ENCODE measurements at regions of chr15 and their contacts with region 1.

Region 1: DNA sequence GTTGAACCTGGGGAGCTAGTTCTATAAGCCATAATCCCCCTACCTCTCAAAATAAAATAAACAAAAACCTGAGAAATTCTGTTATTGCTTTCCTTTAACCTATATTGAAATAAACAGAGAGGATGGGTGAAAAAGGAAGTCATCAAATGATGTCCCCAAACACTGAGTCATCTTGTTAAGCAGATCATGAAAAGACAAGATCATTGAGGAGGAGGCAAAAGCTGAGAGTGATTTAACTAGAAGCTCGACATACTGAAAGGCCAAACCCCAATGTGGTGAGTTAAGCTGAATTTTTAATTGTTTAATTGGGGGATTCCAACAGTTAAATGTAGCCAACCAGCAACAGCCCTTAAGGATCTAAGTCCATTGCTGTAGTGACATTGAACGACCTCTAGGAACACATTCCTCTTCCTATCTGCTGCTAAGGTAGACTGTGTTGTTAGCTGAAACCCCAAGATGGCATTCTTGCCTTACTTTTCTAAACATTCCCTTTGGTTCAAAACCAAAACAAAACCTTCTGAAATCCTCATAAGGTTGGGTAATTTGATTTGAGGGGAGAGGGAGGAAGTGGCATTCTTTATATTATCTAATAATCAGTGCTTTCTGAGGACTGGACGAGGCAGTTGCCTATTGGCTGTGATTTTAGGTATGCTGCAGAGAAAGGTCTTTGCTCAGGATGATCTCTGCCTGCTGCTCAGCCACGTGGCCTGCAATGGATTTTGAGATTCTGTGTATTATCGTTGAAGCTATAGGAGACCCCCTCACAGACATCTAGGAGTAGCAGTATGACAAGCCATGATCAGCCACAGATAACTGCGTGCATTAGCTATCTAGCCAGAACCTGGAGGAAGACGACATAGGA is 62.7 kb upstream of the BNIP2 start:
- DNase-seq: no peak
- H3K4me3 ChIP-seq: no peak overlapping the region
- H3K27ac ChIP-seq: no peak overlapping the region
- H3K4me1 ChIP-seq: peaks cover 0 to 3% (median 0%) of the 10 kb centered on the region in 4 experiments; a peak in 1 of 7 replicates
- H3K27me3 ChIP-seq: no peaks in the 10 kb centered on the region; a peak in 1 of 7 replicates
- CTCF ChIP-seq: peak in 2 of 3 experiments; percentile 91 to 99; a peak in 3 of 4 replicates
- EP300 ChIP-seq: no peak
- POLR2A ChIP-seq: no peak
- RAD21 ChIP-seq: peak; percentile 91 to 92

Region 2: DNA sequence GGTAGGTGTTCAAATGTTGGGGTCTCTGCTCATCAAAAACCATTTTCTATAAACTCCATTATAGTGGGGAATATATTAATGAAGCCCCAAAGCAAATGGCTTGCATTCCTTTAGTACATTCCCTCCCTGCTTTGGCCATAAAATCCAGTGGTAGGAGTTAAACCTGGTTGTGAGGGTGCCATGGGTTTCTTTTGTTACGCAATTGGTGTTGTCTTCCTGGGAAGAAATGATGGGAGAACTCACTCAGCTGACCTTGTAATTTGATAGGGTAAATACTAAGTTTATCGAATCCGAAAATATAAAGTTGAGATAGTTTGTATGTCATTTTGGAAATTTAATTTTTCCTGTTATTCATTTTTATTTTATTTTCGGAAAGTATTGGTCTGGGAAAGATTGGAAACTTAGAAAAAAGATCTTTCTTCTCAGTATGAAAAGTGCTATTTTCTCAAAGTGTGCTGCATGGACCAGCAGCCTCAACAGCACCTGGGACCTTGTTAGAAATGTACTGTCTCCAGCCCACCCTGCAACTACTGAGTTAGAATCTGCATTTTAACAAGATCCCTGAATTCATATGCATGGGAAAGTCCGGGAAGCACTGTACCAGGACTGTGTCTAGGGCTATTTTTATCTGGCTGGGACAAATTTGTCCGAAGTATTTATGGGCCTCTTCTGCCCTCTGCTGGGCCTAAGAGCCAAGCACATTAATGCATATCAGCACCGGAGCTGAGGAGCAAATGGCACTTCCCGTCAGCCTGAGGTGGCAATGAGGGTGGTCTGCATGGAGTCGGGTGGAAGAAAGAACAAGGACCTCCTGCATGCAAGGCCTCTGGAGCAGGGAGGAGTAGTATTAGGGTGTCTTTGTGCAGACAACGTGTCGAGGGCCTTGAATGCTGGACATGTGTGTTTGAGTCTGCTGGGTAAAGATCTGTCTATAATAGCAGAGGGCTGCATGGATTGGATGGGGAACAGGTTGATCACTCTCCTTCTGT is 259.1 kb before region 1 on chr15:
- CTCF ChIA-PET with region 1: no interaction called
- POLR2A ChIA-PET with region 1: no interaction called
- DNase-seq: peak; percentile 29 to 63
- H3K4me3 ChIP-seq: peak overlapping the region in 1 of 4 experiments; percentile 10; a peak in 2 of 8 replicates
- H3K27ac ChIP-seq: no peak overlapping the region
- H3K4me1 ChIP-seq: peaks cover 0 to 6% (median 2%) of the 10 kb centered on the region in 4 experiments; a peak in 2 of 7 replicates
- H3K27me3 ChIP-seq: no peaks in the 10 kb centered on the region
- CTCF ChIP-seq: peak; percentile 63 to 91 (median 90)
- EP300 ChIP-seq: no peak
- POLR2A ChIP-seq: no peak
- RAD21 ChIP-seq: peak; percentile 98

Region 3: GRCh38 chr15:59711451-59712243 is 40.1 kb before region 1 on chr15:
- CTCF ChIA-PET with region 1: no interaction called
- POLR2A ChIA-PET with region 1: no interaction called
- DNase-seq: no peak
- H3K4me3 ChIP-seq: no peak overlapping the region
- H3K27ac ChIP-seq: no peak overlapping the region
- H3K4me1 ChIP-seq: no peaks in the 10 kb centered on the region
- H3K27me3 ChIP-seq: no peaks in the 10 kb centered on the region
- CTCF ChIP-seq: no peak
- EP300 ChIP-seq: no peak
- POLR2A ChIP-seq: no peak
- RAD21 ChIP-seq: no peak

Region 4: DNA sequence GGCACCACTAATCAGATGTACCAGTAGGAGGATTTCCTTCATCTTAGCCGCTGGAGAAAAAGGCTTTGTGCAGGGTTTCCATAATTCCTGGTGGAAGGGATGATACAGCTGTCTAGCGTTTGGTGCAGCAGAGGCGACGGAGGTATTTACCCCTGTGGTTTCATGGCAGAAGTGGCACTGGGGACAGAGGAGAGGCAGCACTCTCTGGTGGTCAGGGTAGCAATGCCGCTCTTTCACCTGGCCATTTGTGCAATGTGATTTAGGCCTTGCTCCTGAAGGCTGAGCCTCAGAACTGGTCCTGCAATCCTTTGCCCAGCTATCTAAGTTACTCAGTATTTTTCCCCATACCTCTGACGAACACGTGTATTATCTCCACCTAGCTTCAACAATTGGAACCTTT is 15.6 kb before region 1 on chr15:
- CTCF ChIA-PET with region 1: interaction called, 27 read pairs
- POLR2A ChIA-PET with region 1: no interaction called
- DNase-seq: no peak
- H3K4me3 ChIP-seq: no peak overlapping the region
- H3K27ac ChIP-seq: no peak overlapping the region
- H3K4me1 ChIP-seq: no peaks in the 10 kb centered on the region
- H3K27me3 ChIP-seq: no peaks in the 10 kb centered on the region
- CTCF ChIP-seq: peak; percentile 54 to 63 (median 56)
- EP300 ChIP-seq: no peak
- POLR2A ChIP-seq: no peak
- RAD21 ChIP-seq: peak; percentile 44 to 49

Region 5: GRCh38 chr15:59741274-59741906 is 10.4 kb before region 1 on chr15:
- CTCF ChIA-PET with region 1: interaction called, 27 read pairs
- POLR2A ChIA-PET with region 1: interaction called, 4 read pairs
- DNase-seq: no peak
- H3K4me3 ChIP-seq: no peak overlapping the region
- H3K27ac ChIP-seq: no peak overlapping the region
- H3K4me1 ChIP-seq: no peaks in the 10 kb centered on the region
- H3K27me3 ChIP-seq: no peaks in the 10 kb centered on the region
- CTCF ChIP-seq: peak in 2 of 3 experiments; percentile 62 to 73; a peak in 3 of 4 replicates
- EP300 ChIP-seq: no peak
- POLR2A ChIP-seq: no peak
- RAD21 ChIP-seq: peak; percentile 77 to 83

Region 6: GRCh38 chr15:59764775-59765174 is 13.0 kb after region 1 on chr15:
- CTCF ChIA-PET with region 1: interaction called, 13 read pairs
- POLR2A ChIA-PET with region 1: no interaction called
- DNase-seq: no peak
- H3K4me3 ChIP-seq: no peak overlapping the region
- H3K27ac ChIP-seq: no peak overlapping the region
- H3K4me1 ChIP-seq: no peaks in the 10 kb centered on the region; a peak in 2 of 7 replicates
- H3K27me3 ChIP-seq: no peaks in the 10 kb centered on the region
- CTCF ChIP-seq: peak in 2 of 3 experiments; percentile 16 to 19; a peak in 2 of 4 replicates
- EP300 ChIP-seq: no peak
- POLR2A ChIP-seq: no peak
- RAD21 ChIP-seq: peak in 1 of 2 experiments; percentile 25; a peak in 1 of 4 replicates

Region 7: GRCh38 chr15:60272625-60273024 is 520.8 kb after region 1 on chr15:
- CTCF ChIA-PET with region 1: interaction called, 11 read pairs
- POLR2A ChIA-PET with region 1: no interaction called
- DNase-seq: no peak
- H3K4me3 ChIP-seq: no peak overlapping the region
- H3K27ac ChIP-seq: no peak overlapping the region
- H3K4me1 ChIP-seq: no peaks in the 10 kb centered on the region
- H3K27me3 ChIP-seq: no peaks in the 10 kb centered on the region
- CTCF ChIP-seq: peak; percentile 25 to 44 (median 29); a peak in 3 of 4 replicates
- EP300 ChIP-seq: no peak
- POLR2A ChIP-seq: no peak
- RAD21 ChIP-seq: peak; percentile 31 to 41; a peak in 3 of 4 replicates

Region 8: DNA sequence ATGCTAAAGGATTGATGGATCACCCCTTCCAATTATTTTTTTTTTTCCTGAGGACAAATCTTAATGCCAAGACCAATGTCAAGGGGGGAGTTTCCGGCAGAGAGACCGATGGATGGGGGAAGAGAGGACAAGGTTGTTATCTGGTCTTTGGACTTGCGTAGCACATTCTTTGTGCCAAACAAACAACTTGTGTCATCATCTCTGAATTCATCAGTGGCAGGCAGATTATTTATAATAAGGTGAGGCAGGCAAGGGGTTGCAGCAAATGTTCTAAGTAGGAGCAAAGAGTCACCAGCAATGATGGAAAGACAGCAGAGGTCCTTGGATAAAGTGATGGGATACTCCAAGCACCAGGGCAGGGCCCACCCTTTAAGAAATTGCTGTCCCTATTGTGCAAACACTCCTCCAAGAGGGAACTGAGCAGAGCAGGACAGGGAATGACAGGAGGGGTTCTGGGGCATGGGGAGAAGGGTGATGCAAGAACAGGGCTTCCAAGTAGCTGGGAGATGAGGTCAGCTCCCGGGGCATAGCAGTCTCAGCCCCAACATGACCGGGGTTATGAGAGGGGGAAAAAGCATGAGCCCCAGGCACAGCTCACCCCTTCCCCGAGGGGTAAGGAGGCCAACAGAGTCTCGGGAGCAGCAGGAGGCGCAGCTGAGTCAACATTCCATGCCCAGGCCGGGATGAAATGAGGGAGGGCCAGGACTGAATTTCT is 588.6 kb after region 1 on chr15:
- CTCF ChIA-PET with region 1: interaction called, 10 read pairs
- POLR2A ChIA-PET with region 1: no interaction called
- DNase-seq: no peak
- H3K4me3 ChIP-seq: no peak overlapping the region
- H3K27ac ChIP-seq: no peak overlapping the region
- H3K4me1 ChIP-seq: peaks cover 3 to 7% (median 4%) of the 10 kb centered on the region in 4 experiments; a peak in 6 of 7 replicates
- H3K27me3 ChIP-seq: no peaks in the 10 kb centered on the region
- CTCF ChIP-seq: peak; percentile 20 to 35 (median 31)
- EP300 ChIP-seq: no peak
- POLR2A ChIP-seq: no peak
- RAD21 ChIP-seq: peak; percentile 21 to 45; a peak in 3 of 4 replicates